Activated B cell treated with CpG ODN at 0.5 μM for 24 hours (primary cell): ENCODE measurements at regions of chr3 and their contacts with region 1.

Region 1: GRCh38 chr3:9769426-9770275 is at the start of gene CAMK1:
- DNase-seq: peak; percentile 43
- ATAC-seq: peak; percentile 92
- H3K4me3 Mint-ChIP-seq: peak within 1 kb of the TSS; percentile 58
- H3K27ac Mint-ChIP-seq: no peak within 1 kb of the TSS
- H3K4me1 Mint-ChIP-seq: peaks cover 20% of the 10 kb centered on the region
- H3K27me3 Mint-ChIP-seq: peaks cover 6% of the 10 kb centered on the region
- CTCF ChIP-seq: no peak
- total RNA-seq, gene CAMK1: 0.69 and 1.7 TPM in 2 replicates

Region 2: DNA sequence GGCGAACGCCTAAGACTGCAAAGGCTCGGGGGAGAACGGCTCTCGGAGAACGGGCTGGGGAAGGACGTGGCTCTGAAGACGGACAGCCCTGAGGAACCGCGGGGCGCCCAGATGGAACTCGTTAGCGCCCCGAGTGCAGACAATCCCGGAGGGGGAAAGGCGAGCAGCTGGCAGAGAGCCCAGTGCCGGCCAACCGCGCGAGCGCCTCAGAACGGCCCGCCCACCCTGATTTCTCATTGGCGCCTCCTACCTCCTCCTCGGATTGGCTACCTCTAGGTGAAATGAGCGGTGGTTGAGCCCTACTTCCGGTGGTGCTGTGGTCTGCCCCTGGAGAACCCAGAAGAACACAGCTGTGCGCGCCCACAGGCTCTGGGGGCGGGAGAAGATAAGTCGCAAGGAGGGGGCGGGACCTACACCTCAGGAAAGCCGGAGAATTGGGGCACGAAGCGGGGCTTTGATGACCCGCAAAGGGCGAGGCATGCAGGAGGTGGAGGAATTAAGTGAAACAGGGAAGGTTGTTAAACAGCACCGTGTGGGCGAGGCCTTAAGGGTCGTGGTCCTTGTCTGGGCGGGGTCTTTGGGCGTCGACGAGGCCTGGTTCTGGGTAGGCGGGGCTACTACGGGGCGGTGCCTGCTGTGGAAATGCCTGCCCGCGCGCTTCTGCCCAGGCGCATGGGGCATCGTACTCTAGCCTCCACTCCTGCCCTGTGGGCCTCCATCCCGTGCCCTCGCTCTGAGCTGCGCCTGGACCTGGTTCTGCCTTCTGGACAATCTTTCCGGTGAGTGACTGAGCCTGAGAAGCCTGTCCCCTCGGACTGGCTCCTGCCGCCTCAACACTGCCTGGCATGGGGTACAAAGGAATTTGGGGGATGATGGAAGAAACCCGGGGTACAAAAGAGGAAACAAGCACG is 19.8 kb before region 1 on chr3 and contains the start of gene OGG1:
- CTCF ChIA-PET with region 1: interaction called, 3 read pairs
- POLR2A ChIA-PET with region 1: no interaction called
- intact Hi-C with region 1: loop called (anchors 2 kb)
- DNase-seq: peak; percentile 89
- ATAC-seq: peak; percentile 90
- H3K4me3 Mint-ChIP-seq: peak within 1 kb of the TSS; percentile 94
- H3K27ac Mint-ChIP-seq: peak within 1 kb of the TSS; percentile 95
- H3K4me1 Mint-ChIP-seq: peaks cover 48% of the 10 kb centered on the region
- H3K27me3 Mint-ChIP-seq: no peaks in the 10 kb centered on the region
- CTCF ChIP-seq: no peak
- total RNA-seq, gene OGG1: 43.5 and 60.7 TPM in 2 replicates